Esophagus muscularis mucosa (tissue), 4 donors: ENCODE measurements at regions of chr17 and their contacts with region 1.

Region 1: GRCh38 chr17:49707608-49708514 is at the start of gene SLC35B1:
- DNase-seq: peak; percentile 100
- H3K4me3 ChIP-seq: peak within 1 kb of the TSS; percentile 81 to 86 (median 84)
- H3K27ac ChIP-seq: peak within 1 kb of the TSS; percentile 87 to 93 (median 91)
- H3K4me1 ChIP-seq: peaks cover 30 to 31% (median 31%) of the 10 kb centered on the region in 4 donors
- H3K27me3 ChIP-seq: no peaks in the 10 kb centered on the region
- CTCF ChIP-seq: peak; percentile 60 to 89 (median 68)
- EP300 ChIP-seq: no peak
- POLR2A ChIP-seq: no peak
- total RNA-seq, gene SLC35B1: 17.0 to 25.3 (median 18.4) TPM

Region 2: DNA sequence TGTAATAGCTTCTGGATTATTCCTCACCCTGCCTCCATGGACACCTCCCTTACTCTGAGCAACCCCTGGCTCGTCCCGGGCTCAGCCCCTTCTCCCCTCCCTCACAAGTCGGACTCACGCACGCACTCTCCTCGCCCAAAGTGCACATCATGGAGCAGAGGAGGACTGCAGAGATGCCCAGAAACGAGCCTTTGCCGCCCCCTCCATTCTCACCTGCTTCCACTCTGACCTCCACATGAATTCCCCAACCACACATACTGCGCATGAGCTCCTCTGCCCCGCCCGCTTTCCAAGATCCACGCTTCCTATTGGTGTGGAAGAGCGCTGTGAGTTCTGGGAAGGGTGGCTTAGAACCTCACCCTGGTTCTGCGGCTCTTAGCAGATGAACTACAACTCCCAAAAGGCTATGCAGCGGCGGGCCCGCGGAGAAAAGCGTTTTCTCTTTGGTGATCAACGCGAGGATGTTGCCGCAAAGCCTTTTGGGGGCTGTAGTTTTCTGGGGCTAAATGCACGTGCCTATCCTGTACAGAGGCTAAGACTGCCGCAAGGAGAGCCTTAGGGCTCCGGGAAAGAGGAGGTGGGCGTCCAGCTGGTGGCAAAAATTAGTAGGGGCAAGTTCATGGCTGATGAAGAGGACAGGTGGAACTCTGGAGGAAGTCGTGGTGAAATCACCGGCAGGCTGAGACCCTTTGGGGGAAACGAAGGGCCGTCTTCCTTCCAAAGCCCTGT is 293.1 kb before region 1 on chr17 and contains the start of gene PHB1:
- intact Hi-C with region 1: loop called (anchors 10 kb)
- DNase-seq: peak; percentile 98
- H3K4me3 ChIP-seq: peak within 1 kb of the TSS; percentile 81 to 89 (median 87)
- H3K27ac ChIP-seq: peak within 1 kb of the TSS in 3 of 4 donors; percentile 58 to 72 (median 60)
- H3K4me1 ChIP-seq: peaks cover 12 to 23% (median 19%) of the 10 kb centered on the region in 4 donors
- H3K27me3 ChIP-seq: no peaks in the 10 kb centered on the region
- CTCF ChIP-seq: no peak
- EP300 ChIP-seq: no peak
- POLR2A ChIP-seq: no peak
- total RNA-seq, gene PHB1: 75.6 to 101 (median 95.6) TPM

Region 3: GRCh38 chr17:49779739-49780231 is 71.9 kb after region 1 on chr17:
- intact Hi-C with region 1: loop called (anchors 2 kb)
- DNase-seq: no peak
- H3K4me3 ChIP-seq: no peak overlapping the region
- H3K27ac ChIP-seq: peak overlapping the region; percentile 56 to 76 (median 73)
- H3K4me1 ChIP-seq: peaks cover 37 to 86% (median 75%) of the 10 kb centered on the region in 4 donors
- H3K27me3 ChIP-seq: no peaks in the 10 kb centered on the region
- CTCF ChIP-seq: peak; percentile 62 to 84 (median 63)
- EP300 ChIP-seq: no peak
- POLR2A ChIP-seq: no peak

Region 4: DNA sequence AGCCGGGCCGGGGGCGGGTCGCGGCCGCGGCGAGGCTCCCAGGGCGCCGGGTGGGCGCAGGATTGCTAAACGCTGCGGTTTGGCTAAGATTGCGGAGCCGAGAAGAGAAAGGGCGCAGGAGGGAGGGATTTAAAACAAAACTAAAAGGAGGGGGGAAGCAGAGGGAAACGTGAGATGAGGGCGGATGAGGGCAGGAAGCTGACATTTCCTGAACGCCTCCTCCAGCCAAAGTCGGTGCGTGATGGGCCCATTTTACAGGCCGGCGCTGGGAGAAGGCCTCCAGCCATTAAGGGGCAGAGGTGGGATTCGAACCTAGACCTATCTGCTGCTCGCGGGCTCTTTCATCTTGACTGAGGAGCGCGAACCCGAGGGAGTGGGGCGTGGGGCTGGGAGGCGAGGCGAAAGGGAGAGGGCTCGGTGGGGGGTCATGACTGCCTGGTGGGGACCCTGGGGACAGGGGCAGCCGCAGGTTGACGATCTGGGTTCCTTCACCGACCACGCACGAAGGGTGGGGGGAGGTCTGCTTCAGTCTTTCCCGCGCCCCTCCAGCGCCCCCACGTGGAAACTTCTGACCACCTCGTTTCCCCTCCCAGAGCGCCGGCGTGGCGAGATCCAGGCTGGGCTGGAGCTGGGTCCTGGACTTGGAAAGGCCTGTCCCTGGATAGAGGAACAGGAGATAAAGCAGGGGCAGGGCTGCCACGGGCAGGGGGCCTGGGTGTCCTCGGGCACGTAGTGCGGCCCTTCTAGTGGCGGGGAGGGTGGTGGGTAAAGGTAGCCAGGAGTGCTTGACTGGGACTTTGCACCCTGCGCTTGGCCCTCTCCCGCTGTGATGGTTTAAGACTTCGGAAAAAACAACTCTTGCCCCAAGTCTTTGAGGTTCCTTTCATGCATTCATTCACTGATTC is 143.8 kb after region 1 on chr17:
- intact Hi-C with region 1: loop called (anchors 1 kb)
- DNase-seq: peak; percentile 93
- H3K4me3 ChIP-seq: peak overlapping the region; percentile 62 to 84 (median 68)
- H3K27ac ChIP-seq: peak overlapping the region in 3 of 4 donors; percentile 41 to 62 (median 46)
- H3K4me1 ChIP-seq: peaks cover 16 to 34% (median 25%) of the 10 kb centered on the region in 4 donors
- H3K27me3 ChIP-seq: no peaks in the 10 kb centered on the region
- CTCF ChIP-seq: peak; percentile 70 to 73 (median 71)
- EP300 ChIP-seq: no peak
- POLR2A ChIP-seq: no peak

Region 5: GRCh38 chr17:49952209-49952911 is 244.5 kb after region 1 on chr17:
- intact Hi-C with region 1: no loop called
- DNase-seq: peak; percentile 94
- H3K4me3 ChIP-seq: no peak overlapping the region
- H3K27ac ChIP-seq: no peak overlapping the region
- H3K4me1 ChIP-seq: no peaks in the 10 kb centered on the region
- H3K27me3 ChIP-seq: peaks cover 0 to 71% (median 2%) of the 10 kb centered on the region in 4 donors
- CTCF ChIP-seq: peak; percentile 58 to 78 (median 71)
- EP300 ChIP-seq: no peak
- POLR2A ChIP-seq: no peak